ENCODE measurements at regions of chr13 and their contacts with region 1.

Region 1: DNA sequence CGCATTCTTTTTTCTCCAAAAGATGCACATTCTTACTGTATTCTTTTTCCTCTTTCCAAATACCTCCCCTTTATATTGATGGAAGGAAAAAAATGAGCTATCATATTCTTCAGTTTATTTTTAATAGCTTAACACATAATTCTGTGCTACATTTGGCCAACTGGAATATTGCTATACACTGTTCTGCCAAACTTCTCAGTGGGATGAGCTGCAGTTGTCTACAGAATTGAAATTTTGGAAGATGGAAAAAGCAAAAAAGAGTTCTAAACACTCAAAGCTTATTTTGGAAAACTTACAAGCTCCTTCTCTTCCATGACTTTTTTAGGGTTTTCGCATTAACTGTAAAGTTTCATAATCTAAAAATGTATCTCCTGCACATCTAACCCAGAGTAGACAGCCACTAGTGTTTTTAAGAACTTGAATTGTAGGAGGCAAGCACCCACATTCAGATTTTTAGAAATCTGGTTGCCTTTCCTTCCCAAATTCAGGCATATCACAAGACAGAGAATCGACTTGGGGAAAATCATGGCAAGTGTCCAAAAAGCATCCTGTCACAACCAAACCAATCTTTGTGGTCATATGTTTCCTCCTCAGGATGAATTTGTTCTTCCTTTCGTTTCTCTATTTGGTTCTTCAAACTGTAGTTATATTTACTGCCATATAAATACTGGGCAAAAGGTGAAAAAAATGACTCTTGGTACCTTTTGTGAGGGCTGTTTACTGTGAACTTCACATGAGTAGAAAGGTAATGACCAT is 111.4 kb upstream of the FRY start:
- DNase-seq: no peak
- CTCF ChIP-seq: no peak

Region 2: GRCh38 chr13:31930901-31931522 is 10.9 kb after region 1 on chr13:
- CTCF ChIA-PET with region 1: interaction called, 11 read pairs
- POLR2A ChIA-PET with region 1: no interaction called
- DNase-seq: peak; percentile 66
- CTCF ChIP-seq: no peak

Measured in GM10248 (cell line).